ENCODE measurements at regions of chr3 and their contacts with region 1.

Region 1: GRCh38 chr3:39107388-39108199 is at the starts of genes GORASP1 and TTC21A:
- H3K4me3 Mint-ChIP-seq: peak within 1 kb of the TSS; percentile 91
- H3K27ac Mint-ChIP-seq: peak within 1 kb of the TSS; percentile 91
- H3K4me1 Mint-ChIP-seq: peaks cover 64% of the 10 kb centered on the region
- H3K27me3 Mint-ChIP-seq: peaks cover 4% of the 10 kb centered on the region

Region 2: DNA sequence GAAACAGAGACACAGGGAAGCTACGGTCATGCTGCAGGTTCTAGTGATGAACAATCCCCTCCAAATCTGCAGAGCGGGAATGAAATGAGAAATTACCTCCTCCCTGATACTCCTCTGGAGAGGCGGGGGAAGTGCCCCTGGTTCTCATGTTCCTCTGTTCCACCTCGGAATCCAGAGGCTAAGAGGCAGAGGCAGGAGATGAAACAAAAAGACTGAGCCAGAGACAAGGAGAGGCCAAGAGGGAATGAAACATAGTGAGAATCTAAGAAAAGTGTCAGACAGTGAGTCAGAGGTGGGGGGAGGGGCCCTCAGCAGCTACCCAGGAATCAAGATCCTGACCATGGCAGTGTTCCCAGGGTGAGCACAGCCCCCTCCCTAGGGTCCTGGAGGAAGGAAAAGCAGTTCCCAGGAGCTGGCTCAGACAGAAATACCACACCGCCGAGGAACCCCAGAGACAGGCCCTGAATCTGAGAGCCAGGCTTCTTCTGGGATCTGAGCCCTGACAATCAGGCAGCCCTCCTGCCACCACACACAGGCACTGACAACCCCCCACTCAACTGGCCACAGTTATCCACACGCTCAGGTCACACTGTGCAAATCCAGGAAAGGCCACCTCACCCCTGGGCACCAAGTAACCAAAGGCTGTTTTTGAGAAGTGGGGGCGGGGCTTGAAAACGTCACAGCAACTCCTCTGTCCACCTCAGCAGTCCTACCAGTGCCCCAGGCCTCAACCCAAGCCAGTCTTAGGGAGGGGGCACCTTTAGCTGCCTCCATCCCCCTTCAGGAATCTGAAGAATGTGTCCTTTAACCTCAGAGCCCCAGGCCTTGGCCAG is 43.4 kb after region 1 on chr3:
- intact Hi-C with region 1: loop called (anchors 2 kb)
- H3K4me3 Mint-ChIP-seq: peak overlapping the region; percentile 88
- H3K27ac Mint-ChIP-seq: peak overlapping the region; percentile 89
- H3K4me1 Mint-ChIP-seq: peaks cover 76% of the 10 kb centered on the region
- H3K27me3 Mint-ChIP-seq: peaks cover 6% of the 10 kb centered on the region

Region 3: GRCh38 chr3:39180546-39181346 is 73.2 kb after region 1 on chr3:
- intact Hi-C with region 1: loop called (anchors 2 kb)
- H3K4me3 Mint-ChIP-seq: peak overlapping the region; percentile 72
- H3K27ac Mint-ChIP-seq: peak overlapping the region; percentile 72
- H3K4me1 Mint-ChIP-seq: peaks cover 53% of the 10 kb centered on the region
- H3K27me3 Mint-ChIP-seq: peaks cover 21% of the 10 kb centered on the region

Region 4: GRCh38 chr3:39419730-39420315 is 312.2 kb after region 1 on chr3:
- intact Hi-C with region 1: no loop called
- H3K4me3 Mint-ChIP-seq: no peak overlapping the region
- H3K27ac Mint-ChIP-seq: no peak overlapping the region
- H3K4me1 Mint-ChIP-seq: peaks cover 8% of the 10 kb centered on the region
- H3K27me3 Mint-ChIP-seq: peaks cover 17% of the 10 kb centered on the region

Measured in dendritic cell treated with granulocyte-macrophage colony-stimulating factor and Interleukin-4, amounts not matched to agents 40 ng/mL and 50 ng/mL, for 4 days (primary cell).